ENCODE measurements at regions of chr1 and their contacts with region 1.

Region 1: GRCh38 chr1:19353596-19353995 is 41.5 kb downstream of the SLC66A1 start:
- DNase-seq: peak; percentile 79
- ATAC-seq: peak; percentile 94
- H3K4me3 Mint-ChIP-seq: peak overlapping the region; percentile 26; the same call in 1 of the 2 replicates
- H3K27ac Mint-ChIP-seq: peak overlapping the region; percentile 61
- H3K4me1 Mint-ChIP-seq: peaks cover 31% of the 10 kb centered on the region
- H3K27me3 Mint-ChIP-seq: no peaks in the 10 kb centered on the region
- CTCF ChIP-seq: no peak

Region 2: DNA sequence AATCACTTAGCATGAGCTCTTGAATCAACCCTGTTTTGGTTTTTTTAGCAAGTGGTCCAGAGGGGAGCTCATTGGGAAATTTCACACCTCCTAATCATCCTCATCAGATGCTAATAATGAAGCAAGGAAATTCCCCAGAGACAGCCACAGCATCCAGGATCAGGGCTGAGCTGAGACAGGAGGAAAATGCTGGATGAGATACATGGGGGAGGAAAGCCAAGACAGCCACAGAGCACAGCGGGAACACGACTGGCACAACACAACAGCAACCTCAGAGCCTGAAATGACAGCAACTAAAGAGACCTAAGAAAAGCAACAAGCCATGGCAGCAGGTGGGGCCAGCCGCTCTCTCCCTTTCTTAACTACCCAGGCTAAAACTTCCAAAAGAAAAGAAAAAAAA is 213.9 kb before region 1 on chr1:
- CTCF ChIA-PET with region 1: no interaction called
- POLR2A ChIA-PET with region 1: no interaction called
- DNase-seq: no peak
- ATAC-seq: peak; percentile 30
- H3K4me3 Mint-ChIP-seq: no peak overlapping the region
- H3K27ac Mint-ChIP-seq: peak overlapping the region; percentile 15; the same call in 1 of the 2 replicates
- H3K4me1 Mint-ChIP-seq: peaks cover 11% of the 10 kb centered on the region
- H3K27me3 Mint-ChIP-seq: no peaks in the 10 kb centered on the region
- CTCF ChIP-seq: no peak

Region 3: DNA sequence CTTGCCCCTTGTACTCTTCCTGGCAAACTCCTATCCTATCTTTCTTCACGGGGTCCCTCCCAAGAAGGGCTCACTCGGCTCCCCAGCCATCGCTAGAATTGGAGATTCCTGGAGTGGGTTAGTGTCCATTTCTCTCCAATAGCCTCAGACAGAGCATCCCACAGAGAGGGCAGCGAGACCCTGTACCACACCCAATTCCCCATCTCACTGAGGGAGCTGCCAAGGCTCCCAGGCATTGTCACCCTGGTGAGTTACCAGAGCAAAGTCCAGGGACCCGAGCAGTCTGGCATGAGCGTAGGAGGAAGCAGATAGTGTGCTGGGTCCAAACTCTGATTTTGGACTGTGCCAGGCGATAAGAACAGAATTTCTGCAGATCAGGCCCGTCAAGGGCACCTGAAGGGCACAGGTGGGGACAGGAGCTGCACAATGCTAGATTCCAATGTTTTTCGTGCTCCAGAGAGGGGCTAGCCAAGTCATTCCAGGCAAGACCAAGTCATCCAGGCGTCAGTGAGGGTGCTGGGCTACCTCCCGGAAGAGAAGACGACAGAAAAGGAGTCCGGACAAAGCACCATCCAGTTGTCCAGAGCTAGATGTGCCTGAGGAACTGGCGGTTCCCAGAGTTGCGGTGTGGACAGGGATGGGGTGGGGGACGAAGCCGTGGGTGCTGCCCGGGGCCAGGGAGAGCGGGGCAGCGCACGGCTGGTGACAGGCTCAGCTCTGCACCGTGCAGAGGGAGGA is 80.3 kb before region 1 on chr1:
- CTCF ChIA-PET with region 1: no interaction called
- POLR2A ChIA-PET with region 1: no interaction called
- DNase-seq: no peak
- ATAC-seq: no peak
- H3K4me3 Mint-ChIP-seq: peak overlapping the region; percentile 18; the same call in 1 of the 2 replicates
- H3K27ac Mint-ChIP-seq: no peak overlapping the region
- H3K4me1 Mint-ChIP-seq: no peaks in the 10 kb centered on the region
- H3K27me3 Mint-ChIP-seq: peaks cover 35% of the 10 kb centered on the region
- CTCF ChIP-seq: no peak

Region 4: DNA sequence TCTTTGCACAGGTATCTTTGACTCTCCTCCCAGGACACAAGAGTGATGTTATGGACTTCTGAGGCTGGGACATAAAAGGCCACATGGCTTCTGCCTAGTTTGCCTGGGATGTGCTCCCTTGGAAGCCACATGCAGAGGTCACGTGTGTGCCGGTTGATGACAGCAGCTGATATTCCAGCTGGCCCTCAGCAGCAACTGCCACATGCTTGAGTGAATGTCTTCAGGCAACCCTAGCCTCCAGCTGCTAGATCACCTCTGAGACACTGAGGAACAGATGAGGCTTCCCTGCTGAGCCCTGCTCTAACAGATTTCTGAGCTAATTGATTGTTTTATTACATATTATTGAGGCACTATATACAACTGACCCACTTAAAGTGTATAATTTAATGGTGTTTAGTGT is 53.4 kb before region 1 on chr1:
- CTCF ChIA-PET with region 1: no interaction called
- POLR2A ChIA-PET with region 1: no interaction called
- DNase-seq: no peak
- ATAC-seq: no peak
- H3K4me3 Mint-ChIP-seq: no peak overlapping the region
- H3K27ac Mint-ChIP-seq: no peak overlapping the region; the same call in 1 of the 2 replicates
- H3K4me1 Mint-ChIP-seq: no peaks in the 10 kb centered on the region
- H3K27me3 Mint-ChIP-seq: peaks cover 12% of the 10 kb centered on the region
- CTCF ChIP-seq: no peak

Region 5: DNA sequence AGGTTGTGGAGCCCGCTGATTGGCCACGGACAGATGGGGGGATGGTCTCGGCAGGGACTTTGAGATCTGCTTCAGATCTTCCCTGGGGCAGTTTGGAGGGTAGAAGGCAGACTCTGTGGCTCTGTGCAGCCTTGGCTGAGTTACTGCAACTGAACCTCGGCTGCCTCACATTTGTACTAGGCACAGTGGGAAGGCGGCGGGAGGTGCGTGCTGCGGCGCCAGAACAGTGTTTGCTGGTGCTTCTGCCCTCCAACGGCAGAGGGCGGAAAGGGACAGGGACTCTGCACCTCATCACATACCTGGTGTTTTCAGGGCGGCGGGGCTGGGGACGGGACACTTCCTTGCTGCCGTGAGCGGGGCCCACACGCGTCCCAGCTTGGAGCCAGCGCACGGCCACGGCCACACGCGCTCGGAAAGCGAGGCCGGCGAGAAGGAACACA is 15.3 kb before region 1 on chr1:
- CTCF ChIA-PET with region 1: interaction called, 11 read pairs
- POLR2A ChIA-PET with region 1: interaction called, 3 read pairs
- DNase-seq: peak; percentile 90
- ATAC-seq: peak; percentile 75
- H3K4me3 Mint-ChIP-seq: peak overlapping the region; percentile 56
- H3K27ac Mint-ChIP-seq: peak overlapping the region; percentile 98
- H3K4me1 Mint-ChIP-seq: peaks cover 34% of the 10 kb centered on the region
- H3K27me3 Mint-ChIP-seq: no peaks in the 10 kb centered on the region
- CTCF ChIP-seq: peak; percentile 33; the same call in 1 of the 2 replicates